Natural killer cell (primary cell): ENCODE measurements at regions of chr15 and their contacts with region 1.

Region 1: DNA sequence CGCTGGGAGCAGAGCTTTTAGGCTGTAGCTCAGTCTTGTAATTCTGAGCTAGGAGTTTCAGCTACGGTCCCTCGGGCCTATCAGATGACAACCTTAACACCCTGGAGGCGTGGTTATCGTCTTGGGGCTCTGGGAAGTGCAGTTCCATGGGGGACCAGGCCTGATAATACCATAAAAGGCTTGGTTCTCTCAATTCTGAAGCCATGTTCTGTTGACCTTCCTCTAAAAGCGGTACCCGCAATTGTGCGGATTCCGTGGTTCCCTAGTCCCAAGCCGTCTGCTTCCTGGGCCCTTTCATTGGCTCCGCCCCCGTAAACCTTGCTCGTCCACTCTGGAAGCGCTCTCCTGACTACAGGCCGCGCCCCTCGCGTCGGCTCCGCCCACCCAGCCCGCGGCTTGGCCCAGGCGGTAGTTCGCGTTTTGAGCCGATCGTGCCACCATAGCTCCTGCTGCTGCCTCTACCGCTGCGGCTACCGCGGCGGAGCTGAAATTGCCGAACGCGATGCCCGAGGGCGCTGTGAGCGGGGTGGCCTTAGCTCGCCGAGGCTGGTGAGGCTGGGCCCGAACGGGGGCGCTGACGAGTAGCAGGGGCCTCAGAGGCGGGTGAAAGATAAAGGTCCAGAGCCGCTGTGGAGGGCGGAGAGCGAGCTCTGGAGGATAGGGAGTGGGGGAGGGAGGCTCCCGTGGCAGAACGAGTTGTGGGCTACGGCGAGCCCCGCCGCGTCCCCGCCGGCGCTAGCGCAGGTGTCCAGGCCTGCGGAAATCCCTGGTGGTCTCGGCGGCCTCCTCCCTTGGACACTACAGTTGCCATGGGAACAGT is at the start of gene MAPKBP1:
- DNase-seq: peak; percentile 98 to 99
- ATAC-seq: peak; percentile 90 to 97 (median 91)
- H3K4me3 ChIP-seq: peak within 1 kb of the TSS; percentile 89
- H3K4me3 Mint-ChIP-seq: peak within 1 kb of the TSS; percentile 97
- H3K27ac ChIP-seq: peak within 1 kb of the TSS; percentile 82
- H3K27ac Mint-ChIP-seq: peak within 1 kb of the TSS; percentile 93 to 94
- H3K4me1 ChIP-seq: peaks cover 23% of the 10 kb centered on the region
- H3K4me1 Mint-ChIP-seq: peaks cover 60 to 63% of the 10 kb centered on the region in 2 donors
- H3K27me3 ChIP-seq: no peaks in the 10 kb centered on the region
- H3K27me3 Mint-ChIP-seq: no peaks in the 10 kb centered on the region
- CTCF ChIP-seq: peak; percentile 72
- total RNA-seq, gene MAPKBP1: 44.8 to 55.4 (median 49.0) TPM

Region 2: GRCh38 chr15:40564591-40565332 is 1209.5 kb before region 1 on chr15 and contains the start of gene CCDC32:
- intact Hi-C with region 1: loop called (anchors 5 kb)
- DNase-seq: peak; percentile 87 to 98
- ATAC-seq: peak; percentile 88 to 97 (median 92)
- H3K4me3 ChIP-seq: peak within 1 kb of the TSS; percentile 92
- H3K4me3 Mint-ChIP-seq: peak within 1 kb of the TSS; percentile 95
- H3K27ac ChIP-seq: peak within 1 kb of the TSS; percentile 92
- H3K27ac Mint-ChIP-seq: peak within 1 kb of the TSS; percentile 94 to 95
- H3K4me1 ChIP-seq: peaks cover 19% of the 10 kb centered on the region
- H3K4me1 Mint-ChIP-seq: peaks cover 34 to 43% of the 10 kb centered on the region in 2 donors
- H3K27me3 ChIP-seq: no peaks in the 10 kb centered on the region
- H3K27me3 Mint-ChIP-seq: no peaks in the 10 kb centered on the region
- CTCF ChIP-seq: no peak
- total RNA-seq, gene CCDC32: 34.2 to 43.7 (median 37.4) TPM

Region 3: GRCh38 chr15:41660235-41661077 is 113.8 kb before region 1 on chr15 and contains the start of gene MGA:
- intact Hi-C with region 1: loop called (anchors 5 kb)
- DNase-seq: peak; percentile 87 to 95
- ATAC-seq: peak; percentile 74 to 88 (median 74)
- H3K4me3 ChIP-seq: peak within 1 kb of the TSS; percentile 44
- H3K4me3 Mint-ChIP-seq: peak within 1 kb of the TSS; percentile 95
- H3K27ac ChIP-seq: peak within 1 kb of the TSS; percentile 95
- H3K27ac Mint-ChIP-seq: peak within 1 kb of the TSS; percentile 96 to 97
- H3K4me1 ChIP-seq: peaks cover 27% of the 10 kb centered on the region
- H3K4me1 Mint-ChIP-seq: peaks cover 24 to 32% of the 10 kb centered on the region in 2 donors
- H3K27me3 ChIP-seq: no peaks in the 10 kb centered on the region
- H3K27me3 Mint-ChIP-seq: peaks cover 0 to 6% of the 10 kb centered on the region in 2 donors
- CTCF ChIP-seq: no peak
- total RNA-seq, gene MGA: 54.9 to 75.0 (median 71.3) TPM

Region 4: DNA sequence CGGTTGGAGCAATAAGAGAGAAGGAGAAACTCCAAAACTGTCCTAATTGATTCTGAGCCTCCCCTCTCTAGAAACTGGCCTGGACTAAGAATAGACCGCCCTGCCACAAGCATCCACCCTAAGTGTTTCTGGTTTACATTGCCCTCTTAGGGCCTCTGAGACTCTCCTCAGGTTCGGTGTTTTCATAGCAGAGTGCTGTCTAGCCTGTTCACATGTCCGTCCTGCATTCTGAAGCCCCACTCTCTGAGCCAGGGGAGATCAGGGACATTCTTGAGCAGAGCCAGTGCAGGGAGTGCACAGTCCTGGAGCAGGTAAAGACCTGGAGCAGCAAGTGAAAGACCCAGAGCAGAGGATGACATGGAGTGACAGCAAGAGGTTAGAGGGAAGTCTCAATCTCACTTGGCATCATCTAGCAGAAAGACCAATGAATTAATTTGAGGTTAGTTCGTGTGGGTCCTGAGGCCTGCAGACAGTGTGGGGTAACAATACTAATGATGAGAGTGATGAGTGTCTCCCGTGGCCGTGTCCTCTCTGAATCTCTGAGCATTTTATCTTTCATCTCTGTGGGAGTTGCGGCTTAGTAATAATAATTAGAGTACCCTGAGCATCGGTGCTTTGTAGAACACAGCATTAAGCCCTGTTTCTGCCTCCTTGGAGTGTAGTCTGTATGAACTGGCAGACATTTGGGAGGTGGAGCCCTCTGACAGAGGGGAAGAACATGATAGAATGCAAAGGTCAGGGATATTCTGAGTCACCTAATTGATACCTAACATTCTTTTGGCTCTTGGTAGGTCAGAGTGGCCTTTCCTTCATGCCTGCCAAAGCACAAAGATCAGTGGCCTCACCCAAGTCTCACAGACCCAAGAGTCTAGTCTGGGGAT is 24.6 kb after region 1 on chr15:
- intact Hi-C with region 1: no loop called
- DNase-seq: no peak
- ATAC-seq: no peak
- H3K4me3 ChIP-seq: no peak overlapping the region
- H3K4me3 Mint-ChIP-seq: no peak overlapping the region
- H3K27ac ChIP-seq: no peak overlapping the region
- H3K27ac Mint-ChIP-seq: no peak overlapping the region
- H3K4me1 ChIP-seq: no peaks in the 10 kb centered on the region
- H3K4me1 Mint-ChIP-seq: peaks cover 10 to 18% of the 10 kb centered on the region in 2 donors
- H3K27me3 ChIP-seq: no peaks in the 10 kb centered on the region
- H3K27me3 Mint-ChIP-seq: no peaks in the 10 kb centered on the region
- CTCF ChIP-seq: no peak

Region 5: DNA sequence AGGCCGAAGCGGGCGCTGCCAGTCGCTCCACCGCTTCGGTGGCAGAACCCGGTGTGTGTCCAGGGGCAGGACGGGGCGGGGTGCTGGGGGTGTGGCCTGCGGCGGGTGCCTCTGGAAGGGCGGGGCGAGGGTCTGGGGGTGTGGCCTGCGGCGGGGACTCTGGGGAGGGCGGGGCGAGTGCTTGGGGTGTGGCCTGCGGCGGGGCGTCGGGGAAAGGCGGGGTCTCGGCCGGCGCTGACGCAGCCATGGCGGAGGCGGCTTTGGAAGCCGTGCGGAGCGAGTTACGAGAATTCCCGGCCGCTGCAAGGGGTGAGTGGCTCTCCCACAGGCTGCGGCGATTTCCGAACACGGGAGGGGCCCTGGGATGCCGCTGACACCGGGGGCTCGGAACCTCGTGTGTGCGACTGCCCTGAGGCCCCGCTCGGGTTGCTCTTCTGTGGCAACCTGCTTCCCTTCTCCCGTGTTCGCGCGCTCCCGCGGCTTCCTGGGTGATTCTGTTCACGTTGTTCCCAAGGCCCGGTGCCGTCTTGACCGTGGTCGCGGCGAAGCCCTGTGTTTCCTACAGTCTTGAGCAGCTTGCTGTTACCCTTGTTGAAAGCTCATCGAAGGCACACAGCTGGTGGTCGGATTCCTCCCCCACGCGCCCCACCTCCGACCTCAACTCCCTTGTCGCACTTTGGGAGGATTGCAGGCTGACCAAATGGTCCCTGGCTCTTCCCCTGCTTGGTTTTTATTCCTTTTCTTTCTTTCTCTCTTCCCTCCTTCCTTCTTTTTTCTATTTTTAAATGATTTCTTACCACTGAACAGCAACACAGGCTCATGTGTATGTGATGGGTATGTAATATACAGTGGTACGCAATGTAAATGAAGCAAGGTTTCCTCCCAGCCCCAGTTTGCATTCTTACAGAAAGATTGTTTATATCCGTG is 53.9 kb after region 1 on chr15 and contains the start of gene JMJD7:
- intact Hi-C with region 1: loop called (anchors 1 kb)
- DNase-seq: peak; percentile 91 to 96
- ATAC-seq: peak; percentile 98 to 99 (median 99)
- H3K4me3 ChIP-seq: peak within 1 kb of the TSS; percentile 82
- H3K4me3 Mint-ChIP-seq: peak within 1 kb of the TSS; percentile 95
- H3K27ac ChIP-seq: peak within 1 kb of the TSS; percentile 61
- H3K27ac Mint-ChIP-seq: peak within 1 kb of the TSS; percentile 79 to 84
- H3K4me1 ChIP-seq: peaks cover 38% of the 10 kb centered on the region
- H3K4me1 Mint-ChIP-seq: peaks cover 35% of the 10 kb centered on the region in 2 donors
- H3K27me3 ChIP-seq: no peaks in the 10 kb centered on the region
- H3K27me3 Mint-ChIP-seq: no peaks in the 10 kb centered on the region
- CTCF ChIP-seq: no peak
- total RNA-seq, gene JMJD7: 20.3 to 36.4 (median 28.7) TPM

Region 6: DNA sequence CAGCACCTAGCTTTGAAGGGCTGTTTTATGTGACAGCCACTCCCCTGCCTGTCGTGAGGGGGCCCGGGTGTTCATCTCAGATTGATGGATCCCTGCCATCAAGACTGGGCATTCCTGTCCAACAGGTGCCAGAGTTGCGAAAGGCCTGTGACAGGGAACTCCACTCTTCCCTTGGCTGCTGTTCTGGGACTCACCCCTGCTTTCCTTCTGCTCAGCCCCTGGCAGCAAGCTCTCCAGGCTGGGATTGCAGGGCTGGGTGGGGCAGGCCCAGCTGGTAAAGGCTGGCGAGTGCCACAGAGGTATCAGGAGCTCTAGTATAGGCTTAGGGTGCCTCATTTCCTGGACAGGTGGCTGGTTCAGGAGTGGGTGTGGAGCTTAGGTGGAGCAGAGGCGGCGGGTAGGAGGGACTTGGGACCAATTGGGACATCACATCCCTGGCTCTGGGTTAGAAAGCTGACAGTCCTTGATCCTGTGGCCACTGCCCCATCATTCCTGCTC is 64.2 kb after region 1 on chr15 and contains the start of gene PLA2G4B:
- intact Hi-C with region 1: no loop called
- DNase-seq: no peak
- ATAC-seq: no peak
- H3K4me3 ChIP-seq: no peak within 1 kb of the TSS
- H3K4me3 Mint-ChIP-seq: no peak within 1 kb of the TSS
- H3K27ac ChIP-seq: no peak within 1 kb of the TSS
- H3K27ac Mint-ChIP-seq: no peak within 1 kb of the TSS
- H3K4me1 ChIP-seq: peaks cover 24% of the 10 kb centered on the region
- H3K4me1 Mint-ChIP-seq: peaks cover 0 to 22% of the 10 kb centered on the region in 2 donors
- H3K27me3 ChIP-seq: no peaks in the 10 kb centered on the region
- H3K27me3 Mint-ChIP-seq: no peaks in the 10 kb centered on the region
- CTCF ChIP-seq: no peak
- total RNA-seq, gene PLA2G4B: 15.2 to 17.5 (median 17.4) TPM

Region 7: DNA sequence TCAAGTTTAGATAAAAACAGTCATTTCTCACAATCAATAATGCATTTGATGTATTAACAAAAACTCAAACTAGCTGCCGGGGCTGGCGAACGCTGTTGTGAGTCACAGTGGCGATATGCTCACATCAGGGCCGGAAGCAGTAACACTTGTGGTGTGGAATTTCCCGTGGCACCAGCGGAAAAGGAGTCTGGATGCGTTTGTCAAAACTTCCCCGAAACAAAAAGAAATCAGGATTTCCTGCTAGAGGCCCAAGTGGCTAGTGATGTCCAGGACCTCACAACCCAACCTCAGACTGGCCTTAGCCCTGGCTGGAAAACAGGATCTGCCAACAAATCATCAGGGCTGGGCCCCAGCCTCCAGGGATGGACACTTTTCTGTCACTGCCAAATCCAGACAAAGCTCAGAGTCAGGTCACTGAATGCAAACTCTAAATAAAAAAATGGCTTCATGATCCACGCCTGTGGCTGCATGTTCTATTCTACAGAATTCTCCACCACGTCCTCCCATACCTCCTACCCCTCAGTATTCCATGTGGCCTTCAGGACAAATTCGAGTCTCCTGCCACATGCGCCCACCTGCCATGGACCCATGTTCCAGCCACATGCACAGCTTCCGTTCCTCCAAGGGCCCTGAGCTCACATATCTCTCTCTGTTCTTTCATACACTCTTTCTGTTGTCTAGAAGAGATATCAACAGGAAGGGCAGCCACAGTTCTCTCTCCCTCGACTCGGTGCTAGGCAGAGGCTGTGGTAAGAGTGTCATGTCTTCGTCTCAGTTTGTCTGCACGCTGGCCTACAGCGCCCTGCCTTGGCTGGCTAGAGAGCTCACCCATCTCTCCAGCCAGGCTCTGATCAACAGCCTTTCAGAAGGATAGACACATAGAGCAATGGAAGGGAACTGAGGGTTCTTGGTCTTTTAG is 162.6 kb after region 1 on chr15:
- intact Hi-C with region 1: loop called (anchors 1 kb)
- DNase-seq: peak; percentile 64 to 94
- ATAC-seq: peak; percentile 77 to 92 (median 88)
- H3K4me3 ChIP-seq: peak overlapping the region; percentile 2
- H3K4me3 Mint-ChIP-seq: peak overlapping the region; percentile 66
- H3K27ac ChIP-seq: peak overlapping the region; percentile 96
- H3K27ac Mint-ChIP-seq: peak overlapping the region; percentile 93 to 94
- H3K4me1 ChIP-seq: peaks cover 50% of the 10 kb centered on the region
- H3K4me1 Mint-ChIP-seq: peaks cover 40 to 43% of the 10 kb centered on the region in 2 donors
- H3K27me3 ChIP-seq: no peaks in the 10 kb centered on the region
- H3K27me3 Mint-ChIP-seq: no peaks in the 10 kb centered on the region
- CTCF ChIP-seq: peak; percentile 34

Region 8: DNA sequence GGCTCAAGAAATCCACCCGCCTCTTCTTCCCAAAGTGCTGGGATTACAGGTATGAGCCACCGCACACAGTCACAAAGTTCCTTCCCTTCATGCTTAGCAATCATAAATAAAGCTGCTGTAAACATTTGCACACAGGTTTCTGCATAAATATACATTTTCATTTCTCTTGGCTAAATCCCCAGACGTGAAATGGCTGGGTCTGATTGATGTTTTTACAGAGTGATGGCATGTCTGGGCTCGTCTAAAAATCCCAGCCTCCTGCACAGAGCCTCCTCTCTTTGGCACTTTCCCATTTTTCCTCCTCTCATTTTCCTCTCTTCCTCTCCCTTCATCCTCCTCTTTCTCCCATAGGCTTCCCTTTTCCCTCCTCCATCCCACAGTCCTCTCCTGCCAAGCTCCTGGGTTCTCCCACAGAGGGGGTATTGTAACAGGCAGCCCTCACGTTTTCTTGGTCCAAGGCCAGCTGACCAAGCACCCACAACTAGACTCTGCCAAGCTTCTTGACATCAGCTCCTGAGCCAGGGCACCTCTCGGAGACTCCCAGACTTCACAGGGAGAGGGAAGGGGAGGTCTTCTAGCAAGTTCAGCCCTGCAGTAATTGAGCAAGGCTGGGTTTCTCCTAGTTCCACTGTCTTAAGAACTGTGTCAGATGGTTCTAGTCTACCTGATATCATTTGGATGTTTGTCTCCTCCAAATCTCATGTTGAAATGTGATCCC is 257.1 kb after region 1 on chr15:
- intact Hi-C with region 1: no loop called
- DNase-seq: no peak
- ATAC-seq: no peak
- H3K4me3 ChIP-seq: no peak overlapping the region
- H3K4me3 Mint-ChIP-seq: no peak overlapping the region
- H3K27ac ChIP-seq: no peak overlapping the region
- H3K27ac Mint-ChIP-seq: no peak overlapping the region
- H3K4me1 ChIP-seq: peaks cover 6% of the 10 kb centered on the region
- H3K4me1 Mint-ChIP-seq: no peaks in the 10 kb centered on the region
- H3K27me3 ChIP-seq: no peaks in the 10 kb centered on the region
- H3K27me3 Mint-ChIP-seq: peaks cover 0 to 9% of the 10 kb centered on the region in 2 donors
- CTCF ChIP-seq: no peak

Region 9: DNA sequence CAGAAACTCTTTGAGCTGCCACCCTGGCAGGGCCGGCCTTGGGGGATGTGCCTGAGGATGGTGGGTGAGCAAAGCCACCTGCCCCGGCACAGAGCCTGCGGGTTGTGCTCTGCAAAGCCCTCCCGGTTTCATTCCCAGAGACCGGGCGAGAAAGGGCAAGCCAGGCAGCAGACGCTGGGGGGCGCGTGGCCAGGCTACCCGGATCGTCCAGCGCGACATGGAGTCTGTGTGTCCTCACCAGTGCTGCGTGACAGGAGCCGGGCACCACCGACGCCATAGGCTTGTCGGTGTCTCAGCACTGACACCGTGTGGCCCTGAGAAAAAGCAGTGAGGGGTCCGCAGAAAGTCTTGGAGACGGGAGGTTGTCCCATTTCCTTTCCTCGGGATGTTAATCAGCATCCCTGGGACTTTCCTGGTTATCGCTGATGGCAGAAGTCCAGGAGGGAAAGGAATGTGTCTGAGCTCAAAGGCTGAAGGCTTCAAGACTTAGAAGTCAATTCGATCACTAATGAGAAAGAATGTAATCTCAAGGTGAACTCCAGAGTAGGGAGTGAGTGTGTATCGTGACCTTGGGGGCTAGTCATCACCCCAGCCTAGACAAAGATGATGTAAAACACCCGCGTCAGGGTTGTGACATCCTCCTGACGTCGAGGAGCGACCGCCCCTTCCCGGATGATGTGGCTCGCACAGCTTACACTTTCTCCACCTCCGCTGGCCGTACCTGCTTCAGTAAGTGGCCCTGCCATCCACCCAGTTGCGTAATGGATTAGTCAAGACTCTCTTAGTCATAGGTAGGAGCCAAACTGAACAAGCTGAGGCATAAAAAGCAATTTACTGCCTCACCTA is 282.9 kb after region 1 on chr15:
- intact Hi-C with region 1: loop called (anchors 5 kb)
- DNase-seq: peak; percentile 35 to 69
- ATAC-seq: peak; percentile 80
- H3K4me3 ChIP-seq: no peak overlapping the region
- H3K4me3 Mint-ChIP-seq: peak overlapping the region; percentile 13
- H3K27ac ChIP-seq: no peak overlapping the region
- H3K27ac Mint-ChIP-seq: peak overlapping the region; percentile 31 to 60
- H3K4me1 ChIP-seq: peaks cover 14% of the 10 kb centered on the region
- H3K4me1 Mint-ChIP-seq: peaks cover 6 to 11% of the 10 kb centered on the region in 2 donors
- H3K27me3 ChIP-seq: peaks cover 17% of the 10 kb centered on the region
- H3K27me3 Mint-ChIP-seq: peaks cover 25 to 58% of the 10 kb centered on the region in 2 donors
- CTCF ChIP-seq: peak; percentile 34